ENCODE measurements at regions of chr3 and their contacts with region 1.

Region 1: DNA sequence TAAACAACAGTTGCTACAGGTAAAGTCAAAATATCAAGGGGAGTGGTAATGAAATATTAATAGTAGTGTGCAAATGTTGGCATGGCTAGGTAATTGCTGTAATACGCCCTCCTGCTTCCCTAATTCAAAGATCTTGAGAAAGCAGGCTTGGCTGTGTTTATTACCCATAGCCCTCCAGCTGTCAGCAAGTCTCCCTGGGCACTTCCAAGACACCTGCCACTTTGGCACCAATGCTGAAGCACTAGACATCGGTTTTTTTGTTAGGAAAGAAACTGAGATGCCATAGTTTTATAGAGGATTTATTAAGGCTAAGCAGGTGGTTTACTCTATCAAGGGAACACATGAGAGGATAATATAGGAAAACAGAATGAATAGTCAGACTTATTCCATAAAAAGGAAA is 64.4 kb downstream of the P2RY1 start:
- DNase-seq: no peak
- H3K4me3 ChIP-seq: no peak overlapping the region
- H3K4me3 Mint-ChIP-seq: no peak overlapping the region
- H3K27ac ChIP-seq: no peak overlapping the region
- H3K27ac Mint-ChIP-seq: no peak overlapping the region
- H3K4me1 ChIP-seq: peaks cover 0 to 7% of the 10 kb centered on the region in 2 donors
- H3K4me1 Mint-ChIP-seq: peaks cover 6% of the 10 kb centered on the region
- H3K27me3 ChIP-seq: no peaks in the 10 kb centered on the region
- H3K27me3 Mint-ChIP-seq: peaks cover under 1 to 2% (median 1%) of the 10 kb centered on the region in 3 donors
- CTCF ChIP-seq: no peak

Region 2: GRCh38 chr3:152834776-152835600 is 64.3 kb before region 1 on chr3 and contains the start of gene P2RY1:
- intact Hi-C with region 1: loop called in 1 of 2 experiments (anchors 10 kb)
- DNase-seq: peak; percentile 61 to 72 (median 61)
- H3K4me3 ChIP-seq: peak within 1 kb of the TSS; percentile 50 to 93 (median 75)
- H3K4me3 Mint-ChIP-seq: peak within 1 kb of the TSS; percentile 96 to 99
- H3K27ac ChIP-seq: peak within 1 kb of the TSS; percentile 34 to 66
- H3K27ac Mint-ChIP-seq: peak within 1 kb of the TSS; percentile 68 to 90 (median 82)
- H3K4me1 ChIP-seq: peaks cover 18 to 24% of the 10 kb centered on the region in 2 donors
- H3K4me1 Mint-ChIP-seq: peaks cover 43% of the 10 kb centered on the region
- H3K27me3 ChIP-seq: no peaks in the 10 kb centered on the region
- H3K27me3 Mint-ChIP-seq: peaks cover 0 to 7% (median 2%) of the 10 kb centered on the region in 3 donors
- CTCF ChIP-seq: peak; percentile 49
- polyA plus RNA-seq, gene P2RY1: 0.16 to 0.97 TPM in 2 of 3 donors, not detected in the other

Region 3: DNA sequence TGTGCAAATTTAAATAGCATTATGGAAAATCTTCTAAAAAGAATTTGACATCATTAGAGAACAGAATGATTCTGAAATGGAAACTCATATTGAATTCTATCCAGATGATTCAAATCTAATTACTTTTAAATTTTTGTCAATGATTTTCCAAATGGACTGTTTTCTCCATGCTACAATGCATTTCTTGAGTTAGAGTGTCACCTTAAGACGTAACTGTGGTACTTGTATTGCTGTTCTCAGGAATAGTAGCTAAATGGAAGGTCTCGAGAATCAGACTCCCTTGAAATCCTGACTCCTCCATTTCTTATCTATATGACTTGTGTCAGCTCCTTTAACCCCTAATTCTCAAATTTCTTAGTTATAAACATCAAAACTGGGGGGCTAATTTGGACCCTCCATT is 37.9 kb after region 1 on chr3:
- intact Hi-C with region 1: no loop called
- DNase-seq: no peak
- H3K4me3 ChIP-seq: no peak overlapping the region
- H3K4me3 Mint-ChIP-seq: no peak overlapping the region
- H3K27ac ChIP-seq: no peak overlapping the region
- H3K27ac Mint-ChIP-seq: no peak overlapping the region
- H3K4me1 ChIP-seq: no peaks in the 10 kb centered on the region
- H3K4me1 Mint-ChIP-seq: no peaks in the 10 kb centered on the region
- H3K27me3 ChIP-seq: peaks cover 0 to 3% of the 10 kb centered on the region in 2 donors
- H3K27me3 Mint-ChIP-seq: peaks cover 0 to 5% (median 2%) of the 10 kb centered on the region in 3 donors
- CTCF ChIP-seq: no peak

Region 4: GRCh38 chr3:153182501-153183293 is 283.4 kb after region 1 on chr3:
- intact Hi-C with region 1: no loop called
- DNase-seq: peak in 1 of 3 donors; percentile 8
- H3K4me3 ChIP-seq: no peak overlapping the region
- H3K4me3 Mint-ChIP-seq: no peak overlapping the region
- H3K27ac ChIP-seq: no peak overlapping the region
- H3K27ac Mint-ChIP-seq: no peak overlapping the region
- H3K4me1 ChIP-seq: peaks cover 11 to 22% of the 10 kb centered on the region in 2 donors
- H3K4me1 Mint-ChIP-seq: peaks cover 25% of the 10 kb centered on the region
- H3K27me3 ChIP-seq: no peaks in the 10 kb centered on the region
- H3K27me3 Mint-ChIP-seq: peaks cover 0 to 1% (median 0%) of the 10 kb centered on the region in 3 donors
- CTCF ChIP-seq: no peak

Region 5: GRCh38 chr3:153273767-153274435 is 374.6 kb after region 1 on chr3:
- intact Hi-C with region 1: no loop called
- DNase-seq: no peak
- H3K4me3 ChIP-seq: no peak overlapping the region
- H3K4me3 Mint-ChIP-seq: no peak overlapping the region
- H3K27ac ChIP-seq: no peak overlapping the region
- H3K27ac Mint-ChIP-seq: no peak overlapping the region
- H3K4me1 ChIP-seq: no peaks in the 10 kb centered on the region
- H3K4me1 Mint-ChIP-seq: peaks cover 11% of the 10 kb centered on the region
- H3K27me3 ChIP-seq: no peaks in the 10 kb centered on the region
- H3K27me3 Mint-ChIP-seq: peaks cover 0 to 1% (median 0%) of the 10 kb centered on the region in 3 donors
- CTCF ChIP-seq: no peak

Measured in CD14-positive monocyte (primary cell).